Activated T-helper 1 cell treated with anti-CD3 and anti-CD28 coated beads, Interleukin-12 subunit alpha, Interleukin-12 subunit beta, Interleukin-2, Interleukin-4 antibody, amounts not matched to agents 30 ng/mL and 10 ng/mL and 1 ng/mL, durations not matched to agents 14 hours and 24 hours and 36 hours (primary cell): ENCODE measurements at regions of chr20 and their contacts with region 1.

Region 1: DNA sequence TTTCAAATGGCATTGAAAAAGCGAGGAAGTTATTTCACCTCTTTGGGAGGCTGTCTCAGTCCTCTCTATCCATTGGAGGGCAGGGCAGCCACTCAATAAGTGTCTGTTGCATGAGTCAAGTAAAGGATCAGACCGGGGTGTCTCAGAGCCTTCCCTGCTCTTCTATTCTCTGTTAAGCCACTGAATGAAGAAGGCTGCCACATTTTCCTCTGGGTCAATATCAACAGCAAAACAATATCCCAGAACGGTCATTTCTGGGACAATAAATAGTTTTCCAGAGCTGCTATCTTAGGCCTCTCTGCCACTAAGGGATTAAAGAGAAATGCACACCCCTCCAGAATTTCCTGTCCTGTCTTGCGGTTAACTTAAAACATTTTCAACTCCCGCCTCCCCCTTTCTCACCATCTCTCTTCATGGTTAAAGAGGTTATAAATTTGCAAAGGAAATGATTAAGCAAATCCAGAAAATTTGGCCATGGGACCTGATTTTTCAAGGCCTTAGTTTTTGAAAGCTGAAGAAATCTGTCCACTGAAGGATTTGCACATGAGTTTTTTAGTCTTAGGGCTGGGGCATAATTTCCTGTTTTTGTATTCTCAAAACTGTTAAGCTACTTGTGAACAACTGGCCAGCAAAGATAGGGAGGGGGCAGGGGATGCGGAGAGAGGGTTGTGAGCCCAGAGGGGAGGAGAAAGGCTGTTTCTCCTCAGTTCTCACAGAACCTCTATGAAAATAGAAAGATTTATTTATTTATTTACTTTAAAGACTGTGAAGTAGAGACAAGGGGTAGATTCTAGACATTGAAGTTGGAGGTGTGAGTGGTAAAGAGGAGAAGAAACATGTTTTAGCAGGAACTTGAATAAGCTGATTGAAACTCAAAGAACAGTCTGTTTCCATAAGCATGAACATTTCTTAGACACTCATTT is 135.7 kb downstream of the BCAS1 start:
- DNase-seq: no peak
- H3K4me3 Mint-ChIP-seq: peak overlapping the region; percentile 72
- H3K27ac Mint-ChIP-seq: peak overlapping the region; percentile 94
- H3K4me1 Mint-ChIP-seq: peaks cover 71% of the 10 kb centered on the region
- H3K27me3 Mint-ChIP-seq: no peaks in the 10 kb centered on the region

Region 2: GRCh38 chr20:53643031-53643832 is 291.4 kb before region 1 on chr20:
- intact Hi-C with region 1: loop called (anchors 5 kb)
- DNase-seq: peak; percentile 66
- H3K4me3 Mint-ChIP-seq: peak overlapping the region; percentile 76
- H3K27ac Mint-ChIP-seq: peak overlapping the region; percentile 97
- H3K4me1 Mint-ChIP-seq: peaks cover 39% of the 10 kb centered on the region
- H3K27me3 Mint-ChIP-seq: no peaks in the 10 kb centered on the region

Region 3: GRCh38 chr20:53839423-53840176 is 95.1 kb before region 1 on chr20:
- intact Hi-C with region 1: no loop called
- DNase-seq: peak; percentile 62
- H3K4me3 Mint-ChIP-seq: peak overlapping the region; percentile 80
- H3K27ac Mint-ChIP-seq: peak overlapping the region; percentile 96
- H3K4me1 Mint-ChIP-seq: peaks cover 72% of the 10 kb centered on the region
- H3K27me3 Mint-ChIP-seq: peaks cover 2% of the 10 kb centered on the region